ENCODE measurements at regions of chr2 and their contacts with region 1.

Region 1: DNA sequence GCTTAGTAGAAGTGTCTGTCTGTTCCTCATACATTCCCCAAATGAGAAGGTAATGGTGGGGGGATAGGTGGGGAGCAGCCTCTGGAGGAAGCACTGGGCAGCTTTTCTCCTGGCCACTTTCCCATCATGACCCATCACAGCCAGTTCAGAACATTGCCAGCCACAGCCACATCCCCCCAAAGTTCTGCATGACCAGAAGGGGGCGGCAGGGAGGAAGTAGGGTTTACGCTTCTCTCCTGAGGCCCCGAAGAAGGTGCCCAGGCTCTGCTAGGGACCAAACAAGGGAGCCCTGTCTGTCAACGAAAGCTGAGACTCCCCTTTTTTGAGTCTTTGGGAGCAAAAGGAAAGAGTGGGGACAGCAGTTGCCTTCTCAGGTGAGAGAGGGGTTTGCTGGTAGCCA is 7.7 kb downstream of the IGFBP5 start:
- DNase-seq: peak; percentile 61

Region 2: DNA sequence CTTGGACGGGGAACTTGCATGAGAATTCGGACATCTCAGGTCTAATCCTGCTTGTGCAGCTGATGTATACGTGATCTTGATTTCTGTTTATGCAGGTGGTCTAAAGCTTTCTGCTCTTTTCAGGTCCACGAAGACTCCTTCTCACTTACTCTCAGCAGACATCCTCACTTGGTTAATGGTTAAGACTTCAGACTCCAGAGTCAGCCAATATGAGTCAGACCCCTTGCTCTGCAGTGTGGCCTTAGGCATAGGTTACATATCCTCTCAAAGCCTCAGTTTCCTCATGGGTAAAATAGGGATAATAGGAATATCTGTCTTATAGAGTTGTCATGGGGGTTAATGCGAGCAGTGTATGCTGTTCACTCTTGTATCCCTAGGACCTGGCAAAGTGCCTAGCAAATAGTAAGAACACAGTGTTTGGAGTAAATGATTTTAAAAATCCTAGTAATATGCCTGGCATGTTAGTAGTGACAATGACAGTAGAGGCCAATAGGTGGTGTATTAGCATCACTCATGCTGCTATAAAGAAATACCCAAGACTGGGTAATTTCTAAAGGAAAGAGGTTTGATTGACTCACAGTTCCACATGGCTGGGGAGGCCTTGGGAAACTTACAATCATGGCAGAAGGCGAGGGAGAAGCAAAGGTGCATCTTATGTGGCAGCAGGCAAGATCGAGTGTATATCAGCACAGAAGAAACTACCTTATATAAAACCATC is 536.2 kb before region 1 on chr2:
- intact Hi-C with region 1: no loop called
- DNase-seq: no peak

Region 3: DNA sequence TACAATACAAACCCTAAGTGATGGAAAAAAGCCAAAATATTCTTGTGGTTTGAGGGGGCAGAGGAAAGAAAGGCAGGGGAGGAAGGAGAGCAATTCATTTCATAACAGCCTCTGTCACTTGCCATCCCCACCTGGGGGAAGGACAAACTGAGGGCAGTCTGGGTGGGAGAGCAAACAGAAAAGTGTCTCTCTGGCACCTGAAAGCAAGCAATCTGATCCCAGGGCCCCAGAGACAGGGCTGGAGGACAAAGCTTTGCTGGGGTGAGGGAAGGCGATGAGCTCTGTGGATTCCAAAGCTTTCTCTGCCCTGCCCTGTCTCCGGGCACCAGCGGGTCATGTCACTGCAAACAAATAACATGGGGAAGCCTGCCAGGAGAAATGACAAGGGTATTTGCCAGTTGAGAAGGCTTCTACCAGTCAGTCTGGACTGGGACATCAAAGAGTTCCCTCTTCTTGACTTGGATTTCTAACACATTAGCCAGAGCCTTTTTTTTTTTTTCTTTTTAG is 700.3 kb after region 1 on chr2:
- intact Hi-C with region 1: loop called (anchors 10 kb)
- DNase-seq: no peak